Vagina (tissue), 2 donors: ENCODE measurements at regions of chrX and their contacts with region 1.

Region 1: GRCh38 chrX:103538734-103539141 is 19.4 kb upstream of the RAB40A start:
- DNase-seq: no peak
- H3K4me3 ChIP-seq: no peak overlapping the region
- H3K27ac ChIP-seq: peak overlapping the region; percentile 78
- H3K4me1 ChIP-seq: peaks cover 14% of the 10 kb centered on the region
- H3K27me3 ChIP-seq: no peaks in the 10 kb centered on the region
- CTCF ChIP-seq: no peak
- POLR2A ChIP-seq: no peak

Region 2: DNA sequence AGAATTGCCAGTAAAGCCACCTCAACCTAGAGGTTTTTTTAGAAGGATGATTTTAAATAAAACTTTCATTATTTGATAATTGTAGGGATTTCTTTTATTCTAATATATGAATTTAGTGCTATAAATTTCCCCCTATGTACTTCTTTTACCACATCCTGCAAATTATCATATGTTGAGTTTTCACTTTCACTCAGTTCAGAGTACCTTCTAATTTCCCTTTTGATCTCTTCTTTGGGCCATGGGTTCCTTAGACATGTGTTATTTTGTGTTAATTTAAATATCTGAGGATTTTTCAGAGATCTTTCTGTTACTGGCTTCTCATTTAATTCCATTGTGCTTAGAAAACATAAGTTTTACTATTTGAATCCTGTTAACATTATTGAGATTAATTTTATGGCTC is 234.0 kb before region 1 on chrX:
- intact Hi-C with region 1: no loop called
- DNase-seq: no peak
- H3K4me3 ChIP-seq: no peak overlapping the region
- H3K27ac ChIP-seq: no peak overlapping the region
- H3K4me1 ChIP-seq: no peaks in the 10 kb centered on the region
- H3K27me3 ChIP-seq: no peaks in the 10 kb centered on the region
- CTCF ChIP-seq: no peak
- POLR2A ChIP-seq: no peak

Region 3: DNA sequence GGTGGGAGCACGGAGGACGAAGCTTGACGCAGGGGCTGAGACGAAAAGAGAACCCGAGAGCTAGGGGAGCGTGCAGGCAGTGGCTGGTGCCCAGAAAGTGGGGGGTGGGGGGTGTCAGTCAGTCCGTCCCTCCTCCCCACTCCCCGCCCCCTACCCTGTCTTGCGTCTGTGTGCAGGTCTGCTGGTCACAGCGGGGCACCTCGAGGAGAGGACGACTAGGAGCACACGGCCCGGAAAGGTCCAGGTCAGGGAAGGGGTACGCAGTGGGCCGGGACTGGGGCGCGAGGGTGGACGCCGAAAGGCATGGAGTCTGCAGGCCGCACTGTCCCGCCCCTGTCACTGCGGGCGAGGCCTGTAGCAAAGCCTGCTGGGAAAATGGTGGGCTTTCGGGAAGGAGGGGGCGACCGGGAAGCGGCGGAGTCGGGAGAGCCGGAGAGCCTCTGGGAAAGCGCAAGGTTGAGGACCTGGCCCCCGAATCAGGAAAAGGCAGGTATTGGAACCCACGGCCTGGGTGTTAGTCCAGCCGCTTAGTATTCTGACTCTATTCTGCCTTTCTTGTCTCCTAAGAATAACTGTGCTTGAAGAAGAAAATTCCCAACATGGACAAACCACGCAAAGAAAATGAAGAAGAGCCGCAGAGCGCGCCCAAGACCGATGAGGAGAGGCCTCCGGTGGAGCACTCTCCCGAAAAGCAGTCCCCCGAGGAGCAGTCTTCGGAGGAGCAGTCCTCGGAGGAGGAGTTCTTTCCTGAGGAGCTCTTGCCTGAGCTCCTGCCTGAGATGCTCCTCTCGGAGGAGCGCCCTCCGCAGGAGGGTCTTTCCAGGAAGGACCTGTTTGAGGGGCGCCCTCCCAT is 90.8 kb after region 1 on chrX:
- intact Hi-C with region 1: loop called (anchors 5 kb)
- DNase-seq: no peak
- H3K4me3 ChIP-seq: peak overlapping the region; percentile 59 to 69
- H3K27ac ChIP-seq: peak overlapping the region; percentile 98
- H3K4me1 ChIP-seq: peaks cover 12% of the 10 kb centered on the region
- H3K27me3 ChIP-seq: no peaks in the 10 kb centered on the region
- CTCF ChIP-seq: no peak
- POLR2A ChIP-seq: peak in 1 of 2 donors; percentile 14

Region 4: DNA sequence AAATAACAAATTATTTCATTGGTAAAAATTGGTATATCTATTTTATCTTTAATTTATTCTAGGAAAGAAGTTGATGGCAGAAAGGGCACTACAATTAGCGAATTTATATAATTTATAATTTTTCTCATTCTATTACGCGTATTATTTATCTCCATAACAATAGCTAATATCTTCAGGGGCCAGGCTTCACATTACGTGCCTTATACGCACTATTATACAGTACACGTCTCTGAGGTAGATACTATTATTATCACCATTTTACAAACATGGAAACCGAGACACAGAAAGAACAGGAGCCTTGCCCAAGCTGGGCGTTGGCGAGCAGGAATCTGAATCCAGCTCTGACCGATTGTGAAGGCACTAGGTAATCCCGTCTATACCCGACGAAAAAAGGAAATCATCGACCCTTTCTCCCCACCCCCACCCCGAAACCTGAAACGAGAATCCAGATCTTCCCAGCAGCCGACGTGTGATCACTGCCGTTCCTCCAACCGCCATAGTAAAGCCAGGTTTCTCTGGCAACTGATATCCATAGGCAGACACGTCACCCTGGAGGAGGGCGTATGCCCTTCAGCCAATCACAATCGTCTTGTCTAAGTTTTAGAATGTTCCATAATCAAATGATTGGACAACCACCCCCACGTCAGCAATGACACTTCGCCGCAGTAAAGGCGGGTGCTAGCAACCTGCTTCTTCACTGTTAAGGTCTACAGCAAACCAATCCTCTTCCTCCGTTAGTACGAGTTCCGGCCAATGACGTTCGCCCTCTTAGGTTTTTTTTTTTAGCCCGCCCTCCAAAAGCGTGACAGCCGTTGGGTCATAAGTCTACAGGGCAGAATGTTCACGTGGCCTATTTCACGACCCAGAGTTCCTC is 147.7 kb after region 1 on chrX and contains the start of gene MORF4L2:
- intact Hi-C with region 1: loop called (anchors 5 kb)
- DNase-seq: peak in 1 of 2 donors; percentile 99
- H3K4me3 ChIP-seq: peak within 1 kb of the TSS; percentile 46 to 59
- H3K27ac ChIP-seq: peak within 1 kb of the TSS; percentile 95
- H3K4me1 ChIP-seq: no peaks in the 10 kb centered on the region
- H3K27me3 ChIP-seq: no peaks in the 10 kb centered on the region
- CTCF ChIP-seq: no peak
- POLR2A ChIP-seq: peak in 1 of 2 donors; percentile 88
- total RNA-seq, gene MORF4L2: 170 TPM